Activated T-helper 1 cell treated with anti-CD3 and anti-CD28 coated beads, Interleukin-12 subunit alpha, Interleukin-12 subunit beta, Interleukin-2, Interleukin-4 antibody, amounts not matched to agents 30 ng/mL and 10 ng/mL and 1 ng/mL, durations not matched to agents 14 hours and 24 hours and 36 hours (primary cell): ENCODE measurements at regions of chr15 and their contacts with region 1.

Region 1: DNA sequence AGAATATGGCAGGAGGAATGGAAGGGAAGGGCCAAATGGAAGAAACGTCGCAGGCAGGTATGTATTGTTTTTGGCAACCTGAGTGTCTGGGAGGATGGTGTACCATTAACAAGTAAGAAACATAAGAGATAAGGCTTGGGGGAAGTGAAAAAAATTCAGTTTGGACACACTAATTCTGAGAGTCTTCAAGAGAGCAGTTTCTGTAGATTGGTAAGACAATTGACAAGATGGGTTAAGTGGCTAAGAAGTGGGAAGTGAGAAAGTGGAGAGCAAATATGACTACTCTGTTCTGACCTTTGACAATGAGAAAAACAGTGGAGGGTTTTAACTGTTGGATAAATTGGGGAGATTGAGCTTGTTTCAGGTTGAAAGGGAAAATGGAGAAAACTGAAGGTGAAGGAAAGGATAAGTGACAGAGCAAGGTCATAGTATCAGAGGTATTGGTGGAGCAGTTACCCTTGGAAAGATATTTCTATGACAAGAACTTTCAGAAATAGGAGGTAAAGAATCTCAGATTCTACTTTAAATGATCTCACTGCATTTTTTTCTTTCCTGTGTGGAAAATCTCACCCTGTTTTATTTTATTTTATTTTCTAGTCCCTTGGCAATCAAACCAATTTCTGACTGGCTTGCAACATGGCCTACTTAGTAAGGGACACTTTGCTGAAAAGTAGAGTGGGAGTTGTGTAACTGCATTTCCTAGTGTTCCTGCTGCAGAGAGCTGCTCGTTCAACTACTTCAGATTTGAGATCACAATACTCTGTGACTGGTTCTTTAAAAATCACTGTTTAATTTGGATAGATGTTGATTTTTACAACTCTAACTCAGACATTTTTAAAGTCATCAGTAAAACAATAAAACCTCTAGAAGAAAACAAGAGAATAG is 23.1 kb upstream of the GABPB1 start:
- DNase-seq: no peak
- H3K4me3 Mint-ChIP-seq: peak overlapping the region; percentile 44
- H3K27ac Mint-ChIP-seq: peak overlapping the region; percentile 92
- H3K4me1 Mint-ChIP-seq: peaks cover 18% of the 10 kb centered on the region
- H3K27me3 Mint-ChIP-seq: no peaks in the 10 kb centered on the region

Region 2: DNA sequence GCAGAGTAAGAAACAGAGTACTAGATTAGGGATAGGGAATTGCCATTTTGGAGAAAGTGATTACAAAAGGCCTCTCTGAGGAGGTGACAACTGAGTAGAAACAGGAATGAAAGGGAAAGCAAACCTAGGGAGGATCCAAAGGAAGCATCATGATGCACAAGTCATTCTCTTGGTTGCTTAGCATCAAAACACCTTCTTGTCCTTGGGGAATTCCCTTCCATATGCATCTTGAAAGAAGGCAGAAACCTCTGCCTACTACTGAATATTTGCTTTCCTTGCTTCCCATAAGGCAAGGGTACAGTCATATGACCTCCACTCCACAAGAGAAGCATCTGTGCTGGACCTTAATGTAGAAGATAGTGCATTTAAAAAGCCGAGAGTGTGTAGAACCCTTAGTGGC is 47.2 kb before region 1 on chr15:
- intact Hi-C with region 1: loop called (anchors 1 kb)
- DNase-seq: no peak
- H3K4me3 Mint-ChIP-seq: no peak overlapping the region
- H3K27ac Mint-ChIP-seq: peak overlapping the region; percentile 69
- H3K4me1 Mint-ChIP-seq: peaks cover 34% of the 10 kb centered on the region
- H3K27me3 Mint-ChIP-seq: no peaks in the 10 kb centered on the region

Region 3: DNA sequence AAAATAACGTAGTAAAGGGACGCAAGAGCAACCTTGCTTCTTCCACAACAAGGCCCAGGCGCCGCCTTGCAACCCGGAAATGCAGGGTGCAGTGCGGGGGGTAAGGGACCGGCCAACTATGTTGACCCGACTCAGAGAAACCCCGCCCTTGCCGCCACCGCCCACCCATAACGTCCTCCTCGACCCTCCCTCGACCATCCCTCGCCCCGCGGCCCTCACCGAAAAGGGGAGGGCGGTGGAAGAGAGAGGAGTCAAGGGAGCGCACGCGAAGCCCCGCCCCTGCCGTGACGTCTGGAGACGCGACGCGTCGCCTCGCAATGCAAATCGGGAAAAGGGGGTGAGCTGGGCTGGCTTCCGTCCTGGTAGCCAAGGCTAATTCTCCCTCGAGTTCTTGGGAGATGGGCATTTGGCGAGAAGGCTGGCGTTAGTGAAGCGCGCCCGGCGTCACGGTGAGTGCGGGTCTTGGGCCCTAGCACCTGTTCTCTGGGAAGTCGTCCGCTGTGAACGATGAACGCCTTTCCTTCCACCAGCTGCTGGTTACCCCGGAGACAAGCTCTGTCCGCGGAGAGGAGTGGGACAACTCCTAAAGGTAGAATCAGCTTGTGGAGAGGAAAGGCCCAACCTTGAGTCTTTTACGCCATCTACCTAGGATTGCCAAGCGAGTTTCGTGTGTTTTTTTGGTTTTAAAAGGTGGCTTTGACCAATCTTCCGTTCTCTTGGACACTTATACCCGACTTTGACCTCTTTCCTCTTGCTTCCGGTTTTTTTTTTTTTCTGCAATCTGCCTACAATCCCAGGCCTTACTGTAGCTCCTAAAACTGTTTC is 46.2 kb after region 1 on chr15 and contains the start of gene USP8:
- intact Hi-C with region 1: loop called (anchors 1 kb)
- DNase-seq: peak; percentile 92
- H3K4me3 Mint-ChIP-seq: peak within 1 kb of the TSS; percentile 98
- H3K27ac Mint-ChIP-seq: peak within 1 kb of the TSS; percentile 92
- H3K4me1 Mint-ChIP-seq: peaks cover 25% of the 10 kb centered on the region
- H3K27me3 Mint-ChIP-seq: no peaks in the 10 kb centered on the region
- total RNA-seq, gene USP8: 66.2 and 66.3 TPM in 2 replicates

Region 4: DNA sequence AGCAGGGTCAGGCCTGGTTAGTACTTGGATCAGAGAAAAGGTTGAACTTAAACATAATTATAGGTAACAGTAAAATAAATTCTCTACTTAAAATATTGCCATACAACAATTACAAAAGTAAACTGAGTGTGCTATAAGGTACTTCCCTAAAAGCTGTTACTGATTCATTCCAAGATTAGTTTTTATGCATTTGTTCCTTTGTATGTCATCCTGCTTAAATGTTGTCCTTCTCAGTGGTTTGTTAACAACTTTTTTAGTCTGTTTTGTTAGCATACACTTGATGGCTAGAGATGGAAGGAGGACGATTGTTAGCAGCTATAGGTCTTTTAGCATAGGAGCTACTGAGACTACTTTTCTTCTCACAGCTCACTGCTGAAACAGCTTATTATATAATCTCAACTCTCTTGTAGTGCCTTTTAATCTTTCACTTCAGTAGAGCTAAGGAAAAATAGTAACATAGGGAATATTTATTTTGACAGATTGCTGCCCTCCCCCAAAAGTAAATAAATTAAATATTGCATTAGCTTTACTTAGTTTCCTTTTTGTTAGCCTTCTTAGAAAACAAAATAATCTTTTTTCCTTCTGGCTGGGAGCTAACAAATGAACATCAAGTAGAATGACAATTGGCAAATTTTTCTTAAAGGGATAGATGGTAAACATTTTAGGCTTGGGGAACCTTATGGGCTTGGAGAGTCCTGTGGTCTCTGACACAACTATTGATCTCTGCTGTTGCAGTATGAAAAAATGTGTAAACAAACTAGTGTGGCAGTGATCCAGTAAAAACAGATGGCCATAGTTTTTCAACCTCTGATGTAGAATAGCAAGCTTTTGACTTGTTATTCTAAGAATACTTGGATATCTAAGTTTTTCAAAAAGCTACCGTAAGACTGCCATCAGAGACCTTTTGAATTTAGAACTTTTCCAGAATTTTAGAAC is 85.6 kb after region 1 on chr15:
- intact Hi-C with region 1: loop called (anchors 1 kb)
- DNase-seq: no peak
- H3K4me3 Mint-ChIP-seq: no peak overlapping the region
- H3K27ac Mint-ChIP-seq: peak overlapping the region; percentile 61
- H3K4me1 Mint-ChIP-seq: peaks cover 31% of the 10 kb centered on the region
- H3K27me3 Mint-ChIP-seq: no peaks in the 10 kb centered on the region

Region 5: GRCh38 chr15:50562735-50563640 is 184.9 kb after region 1 on chr15:
- intact Hi-C with region 1: loop called (anchors 5 kb)
- DNase-seq: peak; percentile 8
- H3K4me3 Mint-ChIP-seq: peak overlapping the region; percentile 16
- H3K27ac Mint-ChIP-seq: peak overlapping the region; percentile 87
- H3K4me1 Mint-ChIP-seq: peaks cover 25% of the 10 kb centered on the region
- H3K27me3 Mint-ChIP-seq: no peaks in the 10 kb centered on the region